ENCODE measurements at regions of chr14 and their contacts with region 1.

Region 1: GRCh38 chr14:96741151-96741977 is 55.8 kb upstream of the VRK1 start:
- DNase-seq: peak; percentile 72
- ATAC-seq: peak; percentile 73
- H3K4me3 ChIP-seq: peak overlapping the region; percentile 67
- H3K27ac ChIP-seq: no peak overlapping the region
- H3K4me1 ChIP-seq: 0 out of 2 replicates have a peak, but pooled peaks cover 6% of the 10 kb centered on the region
- H3K27me3 ChIP-seq: peaks cover 62% of the 10 kb centered on the region
- CTCF ChIP-seq: peak; percentile 80

Region 2: DNA sequence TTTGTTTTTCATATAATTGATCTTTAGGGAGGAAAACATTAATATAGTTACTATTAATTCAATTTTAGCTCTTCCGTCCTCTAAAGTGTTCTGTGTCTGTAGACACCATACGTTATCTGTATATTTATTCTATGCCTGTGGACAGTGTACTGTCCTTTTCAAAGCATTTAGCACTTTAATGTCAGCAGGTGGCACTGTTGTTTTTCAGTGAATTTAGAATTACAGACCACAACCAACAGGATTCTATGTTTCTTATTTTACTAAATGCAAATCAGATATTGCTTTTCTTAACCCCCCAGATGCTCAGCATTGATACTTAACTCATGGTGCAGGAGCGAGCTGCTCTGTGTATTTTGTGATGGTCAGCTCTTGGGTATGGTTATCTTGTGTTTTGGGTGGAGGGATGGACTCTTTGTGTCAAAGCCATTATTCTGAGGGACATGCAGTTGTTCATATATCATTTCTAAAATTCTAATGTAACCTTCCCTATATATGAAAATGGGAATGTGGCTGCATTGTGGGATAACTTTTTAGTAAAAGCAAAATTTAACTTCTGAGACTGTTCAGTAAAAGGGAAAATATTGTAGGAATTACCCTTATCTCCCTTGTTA is 174.0 kb before region 1 on chr14:
- CTCF ChIA-PET with region 1: interaction called, 10 read pairs
- POLR2A ChIA-PET with region 1: no interaction called
- intact Hi-C with region 1: loop called (anchors 5 kb)
- DNase-seq: peak; percentile 43
- ATAC-seq: peak; percentile 74
- H3K4me3 ChIP-seq: no peak overlapping the region
- H3K27ac ChIP-seq: no peak overlapping the region
- H3K4me1 ChIP-seq: no peaks in the 10 kb centered on the region
- H3K27me3 ChIP-seq: no peaks in the 10 kb centered on the region
- CTCF ChIP-seq: peak; percentile 78

Region 3: GRCh38 chr14:96584199-96584906 is 157.0 kb before region 1 on chr14:
- CTCF ChIA-PET with region 1: interaction called, 3 read pairs
- POLR2A ChIA-PET with region 1: no interaction called
- intact Hi-C with region 1: loop called (anchors 2 kb)
- DNase-seq: peak; percentile 73
- ATAC-seq: peak; percentile 91
- H3K4me3 ChIP-seq: no peak overlapping the region
- H3K27ac ChIP-seq: no peak overlapping the region
- H3K4me1 ChIP-seq: no peaks in the 10 kb centered on the region
- H3K27me3 ChIP-seq: peaks cover 5% of the 10 kb centered on the region; the same call in 1 of the 2 replicates
- CTCF ChIP-seq: peak; percentile 87

Region 4: DNA sequence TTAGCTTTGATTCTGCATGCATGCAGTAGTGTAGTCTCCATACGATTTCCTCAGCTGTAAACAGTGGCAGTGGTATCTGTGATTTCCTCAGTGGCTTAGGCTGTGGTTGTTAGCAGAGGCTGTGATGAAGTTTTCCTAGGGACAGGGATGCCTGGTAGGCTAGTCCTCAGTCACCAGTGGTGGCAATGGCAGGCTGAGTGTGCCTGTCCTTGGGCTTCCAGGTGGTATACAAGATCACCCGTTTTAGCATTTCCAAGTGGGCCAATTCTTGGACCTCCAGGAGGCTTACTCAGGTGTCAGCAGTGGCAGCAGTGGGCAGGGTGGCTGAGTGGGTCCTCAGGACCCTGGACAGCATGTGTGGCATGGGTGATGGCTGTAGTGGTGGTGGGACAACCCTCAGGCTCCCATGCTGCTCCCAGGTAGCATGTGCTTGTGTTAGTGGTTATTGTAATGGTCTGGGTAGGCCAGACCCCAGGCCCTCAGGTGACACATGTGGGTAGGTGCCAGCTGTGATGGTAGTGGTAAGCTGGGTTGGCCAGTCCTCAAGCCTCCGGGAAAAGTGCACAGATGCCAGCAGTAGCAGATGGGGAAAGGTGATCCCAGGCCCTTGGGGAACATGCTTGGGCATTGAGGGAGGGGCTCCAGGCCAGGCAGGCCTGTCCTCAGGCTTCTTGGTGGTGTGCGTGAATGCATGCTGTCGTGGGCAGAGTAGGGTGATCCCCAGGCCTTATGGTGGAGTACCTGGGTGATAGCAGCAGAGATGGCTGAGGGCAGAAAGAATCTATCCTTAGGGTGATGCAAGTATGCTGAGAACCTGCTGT is 92.6 kb before region 1 on chr14:
- CTCF ChIA-PET with region 1: no interaction called
- POLR2A ChIA-PET with region 1: no interaction called
- intact Hi-C with region 1: no loop called
- DNase-seq: no peak
- ATAC-seq: no peak
- H3K4me3 ChIP-seq: no peak overlapping the region
- H3K27ac ChIP-seq: no peak overlapping the region
- H3K4me1 ChIP-seq: no peaks in the 10 kb centered on the region
- H3K27me3 ChIP-seq: peaks cover 24% of the 10 kb centered on the region
- CTCF ChIP-seq: no peak

Region 5: GRCh38 chr14:96722736-96723349 is 18.5 kb before region 1 on chr14:
- CTCF ChIA-PET with region 1: interaction called, 15 read pairs
- POLR2A ChIA-PET with region 1: no interaction called
- intact Hi-C with region 1: no loop called
- DNase-seq: no peak
- ATAC-seq: no peak
- H3K4me3 ChIP-seq: no peak overlapping the region
- H3K27ac ChIP-seq: no peak overlapping the region
- H3K4me1 ChIP-seq: no peaks in the 10 kb centered on the region
- H3K27me3 ChIP-seq: peaks cover 37% of the 10 kb centered on the region
- CTCF ChIP-seq: no peak

Region 6: DNA sequence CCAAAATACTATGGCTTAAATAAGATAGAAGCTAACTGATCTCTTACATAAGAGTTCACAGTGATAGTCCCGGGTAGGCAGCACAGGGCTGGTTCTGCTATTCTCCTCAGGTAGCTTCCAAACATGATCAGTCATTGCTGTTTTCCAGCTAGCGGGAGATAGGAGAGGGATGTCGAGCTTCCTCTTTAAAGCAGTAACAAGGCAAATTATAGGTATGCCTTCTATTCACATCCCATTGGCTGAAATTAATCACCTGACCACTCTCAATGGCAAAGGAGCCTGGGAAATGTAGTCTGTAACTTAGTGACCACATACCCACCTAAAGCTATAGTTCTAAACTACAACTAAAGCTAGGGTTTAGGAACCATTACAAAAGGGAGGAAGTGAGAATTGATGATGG is 21.3 kb after region 1 on chr14:
- CTCF ChIA-PET with region 1: interaction called, 10 read pairs
- POLR2A ChIA-PET with region 1: no interaction called
- intact Hi-C with region 1: no loop called
- DNase-seq: peak; percentile 78
- ATAC-seq: peak; percentile 91
- H3K4me3 ChIP-seq: no peak overlapping the region
- H3K27ac ChIP-seq: no peak overlapping the region
- H3K4me1 ChIP-seq: no peaks in the 10 kb centered on the region; the same call in 1 of the 2 replicates
- H3K27me3 ChIP-seq: peaks cover 17% of the 10 kb centered on the region
- CTCF ChIP-seq: no peak

Region 7: DNA sequence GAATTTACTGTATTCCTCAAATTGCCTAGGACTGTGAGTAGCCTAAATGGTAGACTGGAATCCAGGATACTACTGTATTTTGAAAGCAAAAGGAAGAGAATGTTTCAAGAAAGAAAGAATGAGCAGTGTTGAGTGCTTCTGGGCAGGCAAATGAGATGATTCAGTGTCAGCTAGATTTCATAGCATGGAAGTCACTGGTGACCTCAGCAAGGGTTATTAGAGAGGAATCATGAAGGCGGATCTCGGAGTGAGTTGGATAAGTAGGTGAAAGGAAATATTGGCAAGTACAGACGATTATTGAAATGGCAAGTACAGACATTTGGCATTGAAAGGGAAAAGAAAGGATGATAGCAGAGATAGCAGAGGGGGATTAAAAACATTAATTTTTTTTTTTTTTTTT is 82.9 kb after region 1 on chr14:
- CTCF ChIA-PET with region 1: no interaction called
- POLR2A ChIA-PET with region 1: no interaction called
- intact Hi-C with region 1: no loop called
- DNase-seq: peak; percentile 13
- ATAC-seq: peak; percentile 45; the same call in 1 of the 2 replicates
- H3K4me3 ChIP-seq: no peak overlapping the region
- H3K27ac ChIP-seq: no peak overlapping the region
- H3K4me1 ChIP-seq: no peaks in the 10 kb centered on the region
- H3K27me3 ChIP-seq: no peaks in the 10 kb centered on the region
- CTCF ChIP-seq: no peak

Region 8: GRCh38 chr14:96852823-96853422 is 111.6 kb after region 1 on chr14:
- CTCF ChIA-PET with region 1: interaction called, 4 read pairs
- POLR2A ChIA-PET with region 1: no interaction called
- intact Hi-C with region 1: loop called (anchors 5 kb)
- DNase-seq: peak; percentile 52
- ATAC-seq: peak; percentile 70
- H3K4me3 ChIP-seq: no peak overlapping the region
- H3K27ac ChIP-seq: no peak overlapping the region
- H3K4me1 ChIP-seq: peaks cover 13% of the 10 kb centered on the region
- H3K27me3 ChIP-seq: no peaks in the 10 kb centered on the region
- CTCF ChIP-seq: peak; percentile 80

Region 9: DNA sequence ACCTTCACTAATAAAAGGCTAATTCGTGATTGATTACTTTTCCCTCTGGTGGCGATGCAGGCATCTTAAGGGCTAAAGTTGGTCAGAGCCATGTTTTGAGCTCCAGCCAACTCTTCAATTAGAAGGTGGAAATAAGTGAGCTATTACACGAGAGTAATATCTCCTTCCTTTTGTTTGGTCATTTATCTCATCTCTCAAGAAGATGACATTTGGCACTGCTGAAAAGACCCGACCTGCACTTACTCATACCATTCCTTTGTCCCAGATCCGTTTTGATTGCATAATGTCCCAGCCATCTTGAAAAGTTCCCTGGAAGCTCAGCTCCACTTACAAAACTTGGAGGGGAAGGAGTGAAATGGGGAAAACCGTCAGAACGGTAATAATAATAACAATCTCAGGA is 372.0 kb after region 1 on chr14:
- CTCF ChIA-PET with region 1: no interaction called
- POLR2A ChIA-PET with region 1: no interaction called
- intact Hi-C with region 1: no loop called
- DNase-seq: peak; percentile 33
- ATAC-seq: no peak
- H3K4me3 ChIP-seq: no peak overlapping the region
- H3K27ac ChIP-seq: no peak overlapping the region
- H3K4me1 ChIP-seq: peaks cover 12% of the 10 kb centered on the region
- H3K27me3 ChIP-seq: no peaks in the 10 kb centered on the region
- CTCF ChIP-seq: no peak

Region 10: GRCh38 chr14:97177015-97177414 is 435.7 kb after region 1 on chr14:
- CTCF ChIA-PET with region 1: interaction called, 13 read pairs
- POLR2A ChIA-PET with region 1: no interaction called
- intact Hi-C with region 1: no loop called
- DNase-seq: peak; percentile 81
- ATAC-seq: peak; percentile 49
- H3K4me3 ChIP-seq: no peak overlapping the region
- H3K27ac ChIP-seq: 0 out of 2 replicates have a peak overlapping the region, but pooled peaks have one; percentile 77
- H3K4me1 ChIP-seq: peaks cover 40% of the 10 kb centered on the region
- H3K27me3 ChIP-seq: no peaks in the 10 kb centered on the region
- CTCF ChIP-seq: peak; percentile 68